ENCODE measurements at regions of chrX and their contacts with region 1.

Region 1: GRCh38 chrX:103845165-103845653 is 13.2 kb upstream of the RAB9B start:
- DNase-seq: peak; percentile 70
- H3K4me3 ChIP-seq: no peak overlapping the region
- CTCF ChIP-seq: peak; percentile 56

Region 2: DNA sequence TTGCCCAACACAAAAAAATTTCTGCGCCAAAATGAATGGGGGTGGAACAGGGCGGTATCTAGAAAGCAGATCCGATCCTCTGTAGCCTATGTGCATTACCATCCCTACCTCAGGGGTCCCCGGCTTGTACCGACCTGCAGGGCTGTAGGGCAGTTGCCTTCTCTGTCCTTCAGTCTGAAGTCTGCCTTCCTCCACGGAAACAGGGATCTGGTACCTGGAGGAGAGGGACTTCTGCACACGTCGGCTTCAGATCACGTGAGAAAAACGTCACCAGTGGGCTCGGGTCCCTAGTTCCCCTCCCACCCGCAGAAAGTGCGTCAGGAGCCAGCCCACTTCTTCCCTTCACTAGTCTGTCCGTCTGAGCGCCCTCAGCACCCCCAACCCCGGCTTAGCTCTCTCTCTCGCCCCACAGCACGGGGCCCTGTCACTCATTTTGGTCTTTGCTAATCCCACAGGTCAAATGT is 568.6 kb before region 1 on chrX and contains the start of gene TCEAL5:
- CTCF ChIA-PET with region 1: no interaction called
- POLR2A ChIA-PET with region 1: no interaction called
- DNase-seq: no peak
- H3K4me3 ChIP-seq: no peak within 1 kb of the TSS
- CTCF ChIP-seq: no peak

Region 3: DNA sequence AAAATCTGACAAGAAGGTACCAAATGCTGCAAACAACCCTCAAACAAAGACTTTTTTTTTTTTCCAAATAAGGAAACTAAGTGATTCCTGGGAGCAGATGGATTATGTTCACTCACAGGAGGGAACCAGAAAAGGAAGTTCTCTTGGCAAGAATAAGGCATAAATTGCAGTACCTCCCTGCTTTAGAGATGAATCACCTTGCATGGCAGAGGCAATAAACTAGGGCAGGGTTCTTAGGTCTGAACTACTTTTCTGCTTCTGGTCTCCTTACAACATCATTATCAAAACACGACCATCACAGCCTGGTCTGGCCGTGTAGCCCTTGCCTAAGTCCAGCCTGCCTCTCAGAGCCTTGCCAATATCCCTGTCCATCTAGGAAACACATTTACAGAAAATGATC is 128.2 kb before region 1 on chrX:
- CTCF ChIA-PET with region 1: no interaction called
- POLR2A ChIA-PET with region 1: no interaction called
- DNase-seq: no peak
- H3K4me3 ChIP-seq: no peak overlapping the region
- CTCF ChIP-seq: no peak

Region 4: DNA sequence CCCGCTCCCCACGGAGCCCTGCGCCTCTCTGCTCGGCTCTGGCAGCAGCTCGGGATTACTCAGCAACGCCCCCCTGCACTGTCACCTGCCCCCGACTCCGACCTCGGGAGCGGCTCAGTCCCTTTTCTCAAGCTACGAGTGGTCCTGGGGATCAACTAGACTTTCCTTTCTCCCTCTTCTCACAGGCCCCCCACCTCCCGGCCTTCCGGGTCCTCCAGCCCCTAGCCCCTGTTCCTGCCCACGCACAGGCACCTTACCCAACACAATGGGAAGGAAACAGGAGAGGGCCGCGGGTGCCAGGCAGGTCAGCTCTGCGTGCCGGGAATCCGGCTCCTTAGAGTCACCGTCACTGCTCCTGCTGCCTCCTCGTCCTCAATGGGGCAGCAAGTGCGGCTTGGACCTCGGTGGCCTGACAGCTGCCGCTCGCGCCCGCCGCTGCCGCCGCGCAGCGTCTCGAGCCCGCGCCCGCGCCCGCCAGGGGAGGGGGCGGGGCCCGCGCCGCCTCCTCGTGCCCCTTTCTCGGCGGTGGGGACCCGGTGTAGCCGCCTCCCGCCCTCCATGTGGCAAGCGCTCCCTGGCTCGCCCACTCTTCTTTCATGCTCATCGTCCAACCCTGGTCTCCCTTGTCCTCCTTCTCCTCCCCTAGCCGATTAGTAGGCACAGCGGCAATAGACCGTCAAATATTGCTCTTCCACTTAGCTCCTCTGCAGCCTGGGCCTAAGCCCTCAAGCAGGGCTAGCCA is 13.2 kb before region 1 on chrX and contains the start of gene RAB9B:
- CTCF ChIA-PET with region 1: interaction called, 21 read pairs
- POLR2A ChIA-PET with region 1: no interaction called
- DNase-seq: no peak
- H3K4me3 ChIP-seq: peak within 1 kb of the TSS; percentile 62
- CTCF ChIP-seq: no peak

Region 5: DNA sequence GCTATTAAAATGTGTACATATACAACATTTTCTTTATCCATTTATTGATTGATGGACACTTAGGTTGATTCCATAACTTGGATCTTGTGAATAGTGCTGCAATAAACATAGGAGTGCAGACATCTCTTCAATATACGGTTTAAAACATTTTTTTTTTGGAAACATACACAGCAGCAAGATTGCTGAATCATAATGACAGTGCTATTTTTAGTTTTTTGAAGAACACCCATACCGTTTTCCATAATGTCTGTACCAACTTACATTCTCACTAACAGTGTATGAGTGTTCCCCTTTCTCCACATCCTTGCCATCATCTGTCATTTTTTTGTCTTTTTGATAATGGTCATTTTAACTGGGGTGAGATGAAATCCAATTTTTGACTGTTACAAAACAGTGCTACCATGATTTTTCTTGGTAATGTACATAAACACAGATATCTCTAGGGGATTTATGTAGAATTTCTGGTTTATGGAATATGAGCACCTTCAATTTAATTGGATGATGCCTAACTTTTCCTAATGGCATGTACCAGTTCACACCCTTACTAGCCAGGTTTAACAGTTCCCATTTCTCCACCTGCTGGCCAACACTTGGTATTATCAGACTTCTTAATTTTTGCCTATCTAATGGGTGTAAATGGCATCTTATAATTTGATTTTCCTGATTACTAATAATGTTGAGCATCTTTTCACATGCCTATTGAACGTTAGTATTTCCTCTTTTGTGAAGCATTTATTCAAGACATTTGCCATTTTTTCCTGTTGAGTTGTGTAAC is 96.2 kb after region 1 on chrX:
- CTCF ChIA-PET with region 1: interaction called, 28 read pairs
- POLR2A ChIA-PET with region 1: no interaction called
- DNase-seq: no peak
- H3K4me3 ChIP-seq: no peak overlapping the region
- CTCF ChIP-seq: peak; percentile 16

Region 6: GRCh38 chrX:104113222-104113965 is 268.2 kb after region 1 on chrX:
- CTCF ChIA-PET with region 1: interaction called, 21 read pairs
- POLR2A ChIA-PET with region 1: interaction called, 6 read pairs
- DNase-seq: no peak
- H3K4me3 ChIP-seq: peak overlapping the region; percentile 67
- CTCF ChIP-seq: peak; percentile 56

Region 7: DNA sequence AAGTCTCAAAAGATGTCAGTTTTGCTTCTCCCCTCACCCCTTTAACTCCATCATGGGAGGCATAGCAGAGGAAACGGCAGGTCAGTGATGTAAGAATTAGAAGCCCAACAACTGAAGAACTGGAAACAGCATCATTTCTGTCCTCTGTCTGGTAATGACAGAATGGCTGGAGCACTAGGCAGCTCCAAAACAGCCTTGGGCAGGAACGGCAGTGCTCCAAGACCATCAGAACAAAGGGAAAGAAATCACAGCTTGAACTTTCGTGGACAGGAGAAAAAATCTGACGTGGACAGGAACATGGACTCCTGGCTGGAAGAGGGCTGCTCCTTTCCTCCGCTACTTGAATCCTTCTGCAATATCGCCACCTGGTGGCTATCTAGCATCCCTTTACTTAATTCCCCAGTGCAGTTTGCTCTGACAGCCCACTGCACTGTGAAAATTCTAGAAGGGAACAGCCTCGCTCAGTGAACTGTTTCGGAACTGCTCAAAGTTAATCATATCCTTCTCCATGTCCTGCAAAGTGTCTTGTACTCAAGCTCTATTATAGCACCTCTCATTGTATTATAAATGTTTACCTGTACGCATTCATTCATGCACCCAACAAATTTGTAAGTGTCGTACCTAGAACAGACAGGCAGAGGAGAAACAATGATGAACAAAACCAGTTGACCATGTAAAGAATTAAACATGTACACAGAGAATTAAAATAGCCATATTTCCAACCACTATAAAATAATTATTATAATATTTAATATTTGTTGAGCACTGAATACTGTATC is 291.2 kb after region 1 on chrX:
- CTCF ChIA-PET with region 1: interaction called, 17 read pairs
- POLR2A ChIA-PET with region 1: no interaction called
- DNase-seq: peak; percentile 53
- H3K4me3 ChIP-seq: peak overlapping the region; percentile 58
- CTCF ChIP-seq: peak; percentile 58

Measured in AG04449 (cell line).